Left colon (tissue), 2 donors: ENCODE measurements at regions of chr4 and their contacts with region 1.

Region 1: DNA sequence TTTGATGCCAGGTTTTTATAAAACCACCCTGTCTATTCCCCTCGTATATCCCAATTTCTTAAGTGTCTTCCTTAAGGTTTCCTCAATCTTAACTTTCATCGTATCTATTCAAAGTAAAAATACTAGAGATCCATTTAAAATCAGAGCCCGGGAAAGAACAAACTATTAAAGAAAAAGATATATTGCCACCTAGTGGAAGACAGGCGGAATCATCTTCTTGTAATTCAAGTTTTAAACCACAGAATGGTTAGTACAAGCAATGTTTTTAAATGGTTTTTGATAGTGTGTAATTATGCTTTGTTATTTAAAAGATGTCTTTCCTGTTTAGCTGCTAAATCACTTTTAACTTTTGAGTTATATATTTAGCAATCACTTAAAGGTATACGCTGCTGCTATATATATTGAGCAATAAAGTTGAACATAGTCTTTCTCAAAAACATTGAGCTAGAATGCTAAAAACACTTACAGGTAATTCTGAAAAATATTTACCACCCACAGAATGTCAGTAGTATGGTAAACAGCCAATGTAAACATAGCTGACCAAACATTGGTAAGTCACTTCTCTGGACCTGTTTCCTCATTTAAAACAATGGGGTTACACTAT is 18.2 kb downstream of the PRDM8 start:
- DNase-seq: no peak
- ATAC-seq: no peak

Region 2: DNA sequence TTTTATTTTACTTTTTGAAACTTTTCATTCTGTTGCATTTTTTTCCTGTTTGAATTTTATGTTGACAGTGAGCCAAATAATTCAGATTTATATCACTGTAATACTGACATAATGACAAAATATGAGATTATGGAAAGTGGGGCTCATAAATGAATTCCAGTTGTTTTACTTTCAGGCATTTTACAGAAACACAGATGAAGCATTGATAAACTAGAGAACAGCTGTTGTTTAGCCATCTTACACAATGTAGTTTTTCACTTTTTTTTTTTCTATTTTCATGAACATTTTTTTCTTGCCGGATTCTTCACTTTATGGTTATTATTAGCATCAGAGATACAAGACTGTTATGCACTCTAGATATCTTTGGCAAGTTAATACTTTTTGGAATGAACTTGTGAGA is 1184.6 kb before region 1 on chr4:
- intact Hi-C with region 1: loop called in 1 of 2 experiments (anchors 10 kb)
- DNase-seq: no peak
- ATAC-seq: no peak